PC-9 (cell line): ENCODE measurements at regions of chr9 and their contacts with region 1.

Region 1: DNA sequence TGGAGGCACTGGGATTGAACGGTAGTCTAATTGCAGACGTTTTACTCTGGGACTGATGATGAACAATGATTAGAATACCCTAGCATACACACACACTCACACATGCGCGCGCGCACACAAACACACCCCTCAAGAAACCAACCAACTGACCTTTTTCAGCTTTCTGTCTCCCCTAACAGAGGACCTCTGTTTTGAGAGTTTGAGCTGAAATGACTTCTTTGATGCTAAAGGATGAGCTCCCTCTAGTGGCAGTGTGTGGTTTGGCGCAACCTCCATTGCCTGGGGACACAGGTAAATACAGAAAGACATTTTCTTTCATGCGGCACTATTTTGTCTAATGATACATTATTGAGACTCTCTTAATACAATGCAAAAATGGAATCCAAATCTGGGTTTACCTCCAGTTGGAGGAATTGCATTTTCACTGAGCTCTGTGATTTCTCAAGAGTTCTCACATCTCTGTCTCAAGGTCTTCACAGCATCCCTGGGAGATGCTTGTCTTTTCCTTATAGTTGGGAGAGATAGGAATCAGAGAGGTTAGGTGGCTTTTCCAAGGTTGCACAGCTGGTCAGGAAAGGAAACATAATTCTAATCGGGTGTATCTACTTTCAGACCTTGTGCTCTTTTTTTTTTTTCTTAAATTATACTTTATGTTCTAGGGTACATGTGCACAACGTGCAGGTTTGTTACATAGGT is 187.5 kb downstream of the TMEM38B start:
- DNase-seq: peak; percentile 48 to 69
- H3K4me3 ChIP-seq: no peak overlapping the region
- H3K27ac ChIP-seq: no peak overlapping the region
- H3K4me1 ChIP-seq: no peaks in the 10 kb centered on the region
- H3K27me3 ChIP-seq: no peaks in the 10 kb centered on the region
- CTCF ChIP-seq: peak; percentile 96

Region 2: DNA sequence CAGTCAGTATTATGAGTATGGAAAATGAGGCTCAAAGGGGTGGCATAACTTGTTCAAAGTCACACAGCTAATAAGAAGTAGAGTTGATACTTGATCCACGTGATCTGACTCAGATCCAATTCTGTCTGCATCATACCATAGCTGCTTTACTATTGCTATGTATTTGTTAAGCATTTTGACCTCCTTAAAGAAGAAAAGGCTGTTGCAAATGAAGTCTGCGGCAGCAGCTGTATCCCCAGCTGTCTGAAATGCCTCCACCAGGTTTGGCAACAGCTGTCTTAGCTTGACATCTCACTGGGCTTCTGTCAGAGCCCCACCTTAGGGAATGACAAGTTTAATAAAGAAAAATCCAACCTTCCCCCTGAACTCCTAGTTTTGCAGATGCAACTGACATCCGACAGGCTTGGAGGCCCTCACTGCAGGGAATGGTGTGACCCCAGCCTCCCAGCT is 712.9 kb before region 1 on chr9:
- CTCF ChIA-PET with region 1: no interaction called
- POLR2A ChIA-PET with region 1: no interaction called
- intact Hi-C with region 1: no loop called
- DNase-seq: no peak
- H3K4me3 ChIP-seq: no peak overlapping the region
- H3K27ac ChIP-seq: no peak overlapping the region
- H3K4me1 ChIP-seq: no peaks in the 10 kb centered on the region
- H3K27me3 ChIP-seq: no peaks in the 10 kb centered on the region
- CTCF ChIP-seq: no peak

Region 3: GRCh38 chr9:105901514-105902109 is 19.8 kb after region 1 on chr9:
- CTCF ChIA-PET with region 1: interaction called, 4 read pairs
- POLR2A ChIA-PET with region 1: no interaction called
- intact Hi-C with region 1: loop called (anchors 1 kb)
- DNase-seq: peak; percentile 57 to 73
- H3K4me3 ChIP-seq: no peak overlapping the region
- H3K27ac ChIP-seq: no peak overlapping the region
- H3K4me1 ChIP-seq: peaks cover 12% of the 10 kb centered on the region
- H3K27me3 ChIP-seq: no peaks in the 10 kb centered on the region
- CTCF ChIP-seq: peak; percentile 90